GM10248 (cell line): ENCODE measurements at regions of chr6 and their contacts with region 1.

Region 1: DNA sequence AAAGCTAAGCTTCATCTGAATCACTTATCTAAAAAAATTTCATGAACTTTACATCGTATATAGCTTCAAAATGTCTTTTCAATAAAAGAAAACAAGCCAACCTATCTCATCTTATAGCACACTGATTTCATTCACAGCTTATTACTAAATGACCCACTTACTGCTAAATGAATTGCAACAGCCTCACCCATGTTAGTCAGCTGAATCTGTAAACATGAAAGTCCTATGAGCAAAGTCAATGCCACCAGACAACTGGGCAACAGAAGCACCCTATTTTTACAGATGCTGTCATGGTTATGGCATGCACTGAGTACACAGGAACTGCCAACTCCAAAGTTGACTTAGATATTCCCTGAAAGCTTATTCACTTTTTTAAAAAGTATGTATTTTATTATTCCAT is 41.2 kb upstream of the DST start:
- DNase-seq: no peak
- CTCF ChIP-seq: no peak

Region 2: DNA sequence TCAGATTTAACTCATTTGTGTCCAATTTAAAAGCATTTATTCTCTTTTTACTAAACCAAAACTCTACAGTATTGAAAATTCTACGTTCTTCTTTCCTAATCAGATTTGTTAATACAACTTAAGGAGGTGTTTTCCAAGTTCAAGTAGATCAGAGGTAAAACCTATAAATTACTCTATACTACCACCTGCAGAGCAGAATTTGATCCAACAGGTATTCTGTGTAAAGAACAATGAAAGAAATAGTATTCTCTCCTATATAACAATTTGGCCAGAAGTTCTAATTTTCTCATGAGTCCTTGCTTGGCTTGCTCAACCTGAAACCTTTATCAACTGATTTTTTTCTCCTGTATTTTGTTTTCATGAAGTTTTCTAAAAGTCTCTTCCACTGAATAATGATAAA is 12.7 kb before region 1 on chr6:
- CTCF ChIA-PET with region 1: interaction called, 19 read pairs
- POLR2A ChIA-PET with region 1: no interaction called
- DNase-seq: no peak
- CTCF ChIP-seq: no peak